Mammary epithelial cell (primary cell): ENCODE measurements at regions of chr3 and their contacts with region 1.

Region 1: GRCh38 chr3:72473156-72473555 is 375.1 kb downstream of the SHQ1 start:
- DNase-seq: no peak
- H3K4me3 ChIP-seq: no peak overlapping the region
- H3K27ac ChIP-seq: no peak overlapping the region
- H3K4me1 ChIP-seq: no peaks in the 10 kb centered on the region
- H3K27me3 ChIP-seq: no peaks in the 10 kb centered on the region
- CTCF ChIP-seq: no peak

Region 2: DNA sequence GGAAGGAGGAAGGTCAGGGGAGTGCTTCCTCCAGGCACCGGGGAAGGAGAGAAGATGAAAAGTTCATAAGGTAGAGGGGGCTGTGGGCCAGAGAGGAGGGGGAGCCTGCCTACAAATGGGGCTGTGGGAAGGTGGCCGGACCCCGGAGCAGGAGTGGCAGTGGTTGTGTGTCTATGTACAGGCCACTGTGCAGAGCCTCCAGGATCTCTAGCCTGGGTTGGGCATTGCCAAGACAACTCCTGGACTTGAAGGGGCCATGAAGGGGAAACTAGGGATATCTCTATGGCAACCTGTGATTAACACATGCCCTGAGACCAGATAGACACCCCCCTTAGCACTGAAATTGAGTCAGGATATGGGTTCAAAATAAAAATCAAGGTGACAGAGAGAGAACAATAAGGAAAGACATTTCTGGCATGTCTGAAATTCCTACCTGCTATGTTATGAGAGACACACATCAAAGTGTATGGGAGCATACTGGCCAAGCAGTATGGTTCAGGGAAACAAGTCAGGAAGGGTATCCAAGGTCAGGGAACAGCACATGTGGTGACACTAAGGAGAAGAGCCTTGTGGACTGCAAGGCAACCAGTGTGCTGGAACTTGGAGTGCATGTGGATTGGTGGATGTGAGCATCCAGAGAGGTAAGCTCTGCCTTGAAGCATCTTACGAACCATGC is 13.7 kb before region 1 on chr3:
- CTCF ChIA-PET with region 1: interaction called, 10 read pairs
- dilution Hi-C with region 1: no loop called
- in situ Hi-C with region 1: no loop called
- intact Hi-C with region 1: no loop called
- DNase-seq: no peak
- H3K4me3 ChIP-seq: no peak overlapping the region
- H3K27ac ChIP-seq: no peak overlapping the region
- H3K4me1 ChIP-seq: no peaks in the 10 kb centered on the region
- H3K27me3 ChIP-seq: no peaks in the 10 kb centered on the region
- CTCF ChIP-seq: no peak